Sciatic nerve (tissue), 2 donors: ENCODE measurements at regions of chr3 and their contacts with region 1.

Region 1: GRCh38 chr3:108117241-108117775 is 26.5 kb upstream of the CD47 start:
- DNase-seq: no peak
- ATAC-seq: no peak

Region 2: DNA sequence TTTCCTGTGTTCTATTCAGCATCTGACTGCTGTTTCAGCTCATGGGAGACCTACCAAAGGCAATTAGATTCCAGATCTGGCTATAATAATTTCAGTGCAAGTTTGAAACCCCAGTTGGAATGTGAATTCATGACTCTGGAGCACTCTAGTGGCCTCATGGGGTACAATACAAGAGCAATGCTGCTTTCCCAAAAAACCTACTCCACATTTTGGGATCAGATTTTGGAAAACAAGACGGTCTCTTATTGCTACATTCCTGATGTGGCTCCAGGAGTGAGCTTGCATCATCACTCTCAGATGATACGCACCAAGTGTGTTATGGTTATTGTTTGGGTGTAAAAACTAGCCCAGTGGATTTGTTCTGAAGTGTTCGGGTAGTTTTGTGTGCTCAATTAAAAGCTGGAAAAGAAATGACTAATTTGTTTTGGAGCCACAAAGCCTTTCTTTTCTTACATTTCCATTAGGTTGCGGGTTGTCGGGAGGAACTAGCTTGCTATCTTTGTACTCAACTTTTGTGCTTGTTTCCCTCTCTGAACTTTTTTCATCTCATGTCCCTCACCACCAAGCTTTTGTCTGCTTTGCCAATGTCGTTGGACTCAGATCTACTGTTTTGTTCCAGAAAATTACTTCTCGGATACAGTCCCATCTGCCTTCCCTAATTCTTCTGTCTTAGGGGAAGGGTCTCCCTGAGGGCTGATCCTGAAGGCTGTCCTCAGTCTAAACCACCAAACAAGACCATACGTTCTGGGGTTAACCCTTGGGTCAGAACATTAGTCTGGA is 322.5 kb before region 1 on chr3:
- intact Hi-C with region 1: no loop called
- DNase-seq: no peak
- ATAC-seq: peak; percentile 94

Region 3: DNA sequence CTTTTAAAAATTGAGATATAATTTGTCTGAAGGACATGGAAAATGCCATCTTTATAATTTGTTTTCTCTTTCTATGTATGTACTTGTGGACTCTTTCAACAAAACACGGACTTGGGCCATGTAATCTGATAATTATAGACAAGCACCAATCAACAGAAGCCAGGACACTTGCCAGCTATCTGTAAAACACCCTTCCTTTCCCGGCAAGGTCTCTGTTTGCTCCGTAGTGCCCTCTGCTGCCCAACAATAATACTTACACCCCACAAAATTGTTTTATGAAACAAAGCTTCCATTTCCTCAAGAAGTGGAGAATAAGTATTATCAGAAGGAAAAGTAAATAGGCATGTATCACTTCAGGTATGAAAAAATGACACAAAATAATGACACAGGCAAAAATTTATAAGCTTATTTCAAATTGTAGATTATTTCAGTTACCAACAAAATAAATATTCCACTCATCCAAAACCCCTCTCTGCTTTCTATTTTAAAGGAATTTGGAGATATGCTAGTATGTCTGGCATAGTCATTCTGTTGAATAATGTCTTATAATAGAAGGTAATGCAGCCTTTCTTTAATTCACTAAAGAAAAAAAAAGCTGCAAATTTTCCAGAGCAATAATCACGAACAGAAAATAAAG is 360.3 kb after region 1 on chr3:
- intact Hi-C with region 1: loop called (anchors 10 kb)
- DNase-seq: peak; percentile 60
- ATAC-seq: peak; percentile 55

Region 4: GRCh38 chr3:109985943-109986555 is 1868.7 kb after region 1 on chr3:
- intact Hi-C with region 1: no loop called
- DNase-seq: no peak
- ATAC-seq: no peak